ENCODE measurements at regions of chr17 and their contacts with region 1.

Region 1: GRCh38 chr17:47789611-47790561 is 31.7 kb downstream of the OSBPL7 start:
- DNase-seq: peak; percentile 79 to 92
- ATAC-seq: peak; percentile 99
- H3K4me3 ChIP-seq: peak overlapping the region; percentile 48
- H3K27ac ChIP-seq: peak overlapping the region; percentile 35 to 78; a peak in 4 of 6 replicates
- H3K4me1 ChIP-seq: peaks cover 3% of the 10 kb centered on the region; the same call in 1 of the 3 replicates
- CTCF ChIP-seq: peak; percentile 70
- EP300 ChIP-seq: no peak
- POLR2A ChIP-seq: no peak
- RAD21 ChIP-seq: peak; percentile 71 to 84

Region 2: GRCh38 chr17:47733047-47733673 is 56.7 kb before region 1 on chr17 and contains the start of gene TBX21:
- CTCF ChIA-PET with region 1: interaction called, 14 read pairs
- POLR2A ChIA-PET with region 1: interaction called, 4 read pairs
- DNase-seq: peak; percentile 80 to 90
- ATAC-seq: peak; percentile 74 to 91
- H3K4me3 ChIP-seq: peak within 1 kb of the TSS; percentile 48
- H3K27ac ChIP-seq: peak within 1 kb of the TSS in 1 of 2 experiments; percentile 74; a peak in 3 of 6 replicates
- H3K4me1 ChIP-seq: 0 out of 3 replicates have a peak, but pooled peaks cover 4% of the 10 kb centered on the region
- CTCF ChIP-seq: peak; percentile 45; the same call in 2 of the 3 replicates
- EP300 ChIP-seq: no peak
- POLR2A ChIP-seq: 0 out of 2 replicates have a peak, but pooled peaks have one; percentile 39
- RAD21 ChIP-seq: peak; percentile 40; a peak in 3 of 5 replicates
- polyA plus RNA-seq, gene TBX21: 0.03 TPM in 1 of 2 replicates, not detected in the other

Region 3: GRCh38 chr17:47776330-47777197 is 13.3 kb before region 1 on chr17:
- CTCF ChIA-PET with region 1: interaction called, 21 read pairs
- POLR2A ChIA-PET with region 1: no interaction called
- DNase-seq: peak; percentile 71 to 78
- ATAC-seq: peak; percentile 82 to 94
- H3K4me3 ChIP-seq: no peak overlapping the region
- H3K27ac ChIP-seq: no peak overlapping the region
- H3K4me1 ChIP-seq: no peaks in the 10 kb centered on the region
- CTCF ChIP-seq: peak; percentile 83
- EP300 ChIP-seq: no peak
- POLR2A ChIP-seq: no peak
- RAD21 ChIP-seq: peak; percentile 65 to 71

Region 4: GRCh38 chr17:47802341-47803022 is 12.6 kb after region 1 on chr17:
- CTCF ChIA-PET with region 1: interaction called, 42 read pairs
- POLR2A ChIA-PET with region 1: no interaction called
- DNase-seq: peak; percentile 77 to 92
- ATAC-seq: peak; percentile 91 to 95
- H3K4me3 ChIP-seq: no peak overlapping the region
- H3K27ac ChIP-seq: no peak overlapping the region
- H3K4me1 ChIP-seq: no peaks in the 10 kb centered on the region
- CTCF ChIP-seq: peak; percentile 84
- EP300 ChIP-seq: no peak
- POLR2A ChIP-seq: no peak
- RAD21 ChIP-seq: peak; percentile 89 to 90

Region 5: DNA sequence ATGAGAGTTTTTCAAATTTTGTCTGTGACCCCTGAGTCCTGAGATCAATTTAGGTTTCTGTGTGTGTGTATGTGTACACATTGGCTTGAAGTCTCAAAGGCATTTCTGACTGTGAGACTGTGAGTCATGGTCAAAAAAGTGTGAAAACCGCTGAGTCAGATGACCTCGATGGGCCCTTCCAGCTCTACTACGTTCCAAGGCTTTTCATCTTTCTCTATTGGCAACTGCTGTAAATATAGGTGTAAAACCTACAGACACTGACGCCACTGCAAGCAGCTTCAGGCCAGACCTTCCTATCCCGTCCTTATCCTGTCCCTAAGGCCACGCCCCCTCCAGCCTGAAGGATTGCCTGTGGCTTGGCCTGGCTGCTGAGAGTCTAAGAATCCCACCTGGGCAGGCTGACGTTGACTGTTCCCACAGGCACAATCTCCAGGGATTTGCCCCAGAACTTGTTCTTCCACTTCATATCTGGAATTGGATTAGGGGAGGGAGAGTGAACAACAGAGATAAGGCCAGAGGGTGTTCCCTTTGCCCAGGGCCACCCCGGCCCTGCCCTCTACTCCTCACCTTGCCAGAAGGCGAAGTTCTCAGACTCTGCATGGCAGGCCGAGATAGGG is 20.4 kb after region 1 on chr17:
- CTCF ChIA-PET with region 1: interaction called, 11 read pairs
- POLR2A ChIA-PET with region 1: no interaction called
- DNase-seq: peak; percentile 75 to 88
- ATAC-seq: peak; percentile 69 to 85
- H3K4me3 ChIP-seq: no peak overlapping the region
- H3K27ac ChIP-seq: peak overlapping the region; percentile 36 to 75; a peak in 4 of 6 replicates
- H3K4me1 ChIP-seq: peaks cover 25% of the 10 kb centered on the region
- CTCF ChIP-seq: no peak
- EP300 ChIP-seq: 0 out of 5 replicates have a peak, but pooled peaks of 1 of the 2 experiments have one; percentile 16
- POLR2A ChIP-seq: no peak
- RAD21 ChIP-seq: no peak

Measured in A549 (cell line).